ENCODE measurements at regions of chr10 and their contacts with region 1.

Region 1: GRCh38 chr10:987870-988666 is at the start of gene GTPBP4:
- DNase-seq: peak; percentile 95
- H3K4me3 ChIP-seq: peak within 1 kb of the TSS; percentile 91
- CTCF ChIP-seq: no peak

Region 2: DNA sequence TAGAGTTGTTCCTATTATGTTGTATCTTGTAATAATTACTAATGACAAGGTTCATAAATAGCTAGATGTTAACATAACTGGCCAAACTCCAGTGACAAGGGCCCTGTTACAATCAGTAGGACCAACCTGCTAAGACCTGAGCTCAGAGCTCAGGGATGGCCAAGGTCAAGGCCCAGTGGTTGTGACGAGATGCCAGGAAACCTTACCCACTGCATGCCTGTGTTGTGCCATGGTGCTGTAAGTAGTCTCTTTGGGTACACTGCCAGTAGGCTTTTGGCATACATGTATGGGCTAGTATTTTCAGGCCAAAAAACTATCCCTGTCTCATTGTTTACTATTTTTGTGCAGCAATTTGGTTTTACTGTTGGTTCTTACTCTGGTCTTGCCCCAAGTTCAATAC is 45.5 kb after region 1 on chr10:
- in situ Hi-C with region 1: no loop called
- DNase-seq: no peak
- H3K4me3 ChIP-seq: no peak overlapping the region
- CTCF ChIP-seq: no peak

Region 3: GRCh38 chr10:1048732-1049424 is 60.8 kb after region 1 on chr10 and contains the start of gene IDI1:
- in situ Hi-C with region 1: loop called (anchors 5 kb)
- DNase-seq: peak; percentile 97
- H3K4me3 ChIP-seq: peak within 1 kb of the TSS; percentile 82
- CTCF ChIP-seq: no peak